ENCODE measurements at regions of chr3 and their contacts with region 1.

Region 1: DNA sequence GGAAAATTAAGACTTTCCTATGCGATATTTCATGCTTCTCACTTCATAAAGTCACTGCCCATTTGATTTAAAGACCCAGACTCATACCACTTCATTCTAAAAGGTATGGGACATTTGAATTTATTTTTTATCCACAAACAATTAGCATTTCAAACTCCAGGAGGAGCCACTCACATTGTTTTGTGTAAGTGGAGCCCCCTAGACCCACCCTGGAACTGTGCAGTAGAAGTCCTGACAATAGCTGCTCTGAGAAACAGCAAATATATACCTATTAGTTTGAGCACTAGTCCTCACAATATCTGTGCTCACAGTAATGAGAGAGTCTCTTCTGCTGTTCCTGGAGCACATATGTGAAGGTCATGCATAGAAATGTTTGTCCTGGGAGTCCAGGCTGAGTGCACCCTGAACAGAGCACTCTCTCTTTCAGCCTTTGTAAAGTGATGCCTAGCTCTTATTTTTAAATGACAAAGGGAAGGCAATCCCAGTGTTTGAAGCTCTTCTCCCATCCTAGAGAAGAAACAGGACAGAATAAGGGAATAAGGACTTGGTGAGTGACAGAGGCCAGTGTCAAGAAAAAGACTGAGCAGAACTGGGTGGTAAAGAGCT is 127.5 kb upstream of the STRIT1 start:
- DNase-seq: no peak
- ATAC-seq: peak; percentile 52; the same call in 1 of the 2 replicates
- H3K4me3 ChIP-seq: no peak overlapping the region
- H3K27ac ChIP-seq: no peak overlapping the region
- H3K4me1 ChIP-seq: peaks cover 0 to 10% of the 10 kb centered on the region in 2 experiments; a peak in 1 of 4 replicates
- H3K27me3 ChIP-seq: no peaks in the 10 kb centered on the region
- CTCF ChIP-seq: peak; percentile 24 to 47 (median 34); a peak in 4 of 6 replicates
- POLR2A ChIP-seq: no peak
- RAD21 ChIP-seq: peak; percentile 32; the same call in 1 of the 2 replicates

Region 2: DNA sequence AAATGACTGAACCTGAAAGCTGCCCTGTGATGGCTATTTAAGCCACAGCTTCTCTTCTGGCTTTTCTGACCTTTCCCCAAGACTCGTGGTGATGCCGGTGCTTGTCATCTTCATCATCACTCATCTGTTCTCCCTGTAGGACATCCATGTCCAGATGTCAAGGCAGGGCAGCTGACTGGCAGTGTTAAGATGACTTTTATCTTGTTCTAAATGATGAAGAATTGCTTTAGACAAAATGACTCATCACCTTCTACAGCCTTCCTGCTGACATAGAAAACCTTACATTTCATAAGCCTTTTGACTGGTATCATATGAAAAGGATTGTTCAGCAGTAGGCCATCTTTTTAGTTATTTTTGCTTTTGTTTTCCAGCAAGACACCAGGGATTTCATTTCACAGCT is 924.0 kb before region 1 on chr3:
- CTCF ChIA-PET with region 1: no interaction called
- POLR2A ChIA-PET with region 1: no interaction called
- RAD21 ChIA-PET with region 1: no interaction called
- intact Hi-C with region 1: loop called (anchors 5 kb)
- DNase-seq: no peak
- ATAC-seq: no peak
- H3K4me3 ChIP-seq: no peak overlapping the region
- H3K27ac ChIP-seq: no peak overlapping the region
- H3K4me1 ChIP-seq: no peaks in the 10 kb centered on the region
- H3K27me3 ChIP-seq: no peaks in the 10 kb centered on the region
- CTCF ChIP-seq: no peak
- POLR2A ChIP-seq: no peak
- RAD21 ChIP-seq: no peak

Region 3: DNA sequence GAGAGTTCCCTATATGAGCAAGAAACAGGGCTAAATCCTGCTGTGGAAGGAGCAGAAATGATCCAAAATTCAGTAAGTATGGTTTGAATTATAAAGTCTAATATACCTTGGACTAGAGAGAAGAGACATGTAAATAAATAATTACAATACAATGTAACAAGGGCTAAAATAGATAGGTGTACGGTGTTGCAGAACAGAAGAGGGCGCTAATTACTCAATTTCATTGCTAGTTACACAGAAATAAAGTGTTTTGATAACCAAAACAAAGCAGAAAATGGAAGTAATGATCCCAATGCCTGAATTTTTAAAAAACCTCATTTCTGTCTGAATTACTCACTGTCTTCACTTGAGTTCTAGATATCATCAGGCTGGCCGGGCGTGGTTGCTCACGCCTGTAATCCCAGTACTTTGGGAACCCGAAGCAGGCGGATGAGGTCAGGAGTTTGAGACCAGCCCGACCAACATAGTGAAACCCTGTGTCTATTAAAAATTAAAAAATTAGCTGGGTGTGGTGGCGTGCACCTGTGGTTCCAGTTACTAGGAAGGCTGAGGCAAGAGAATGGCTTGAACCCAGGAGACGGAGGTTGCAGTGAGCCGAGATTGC is 332.2 kb after region 1 on chr3:
- CTCF ChIA-PET with region 1: no interaction called
- POLR2A ChIA-PET with region 1: no interaction called
- RAD21 ChIA-PET with region 1: no interaction called
- intact Hi-C with region 1: no loop called
- DNase-seq: no peak
- ATAC-seq: peak; percentile 81
- H3K4me3 ChIP-seq: no peak overlapping the region
- H3K27ac ChIP-seq: no peak overlapping the region
- H3K4me1 ChIP-seq: peaks cover 0 to 8% of the 10 kb centered on the region in 2 experiments; a peak in 3 of 4 replicates
- H3K27me3 ChIP-seq: no peaks in the 10 kb centered on the region
- CTCF ChIP-seq: peak; percentile 47 to 74 (median 74); a peak in 5 of 6 replicates
- POLR2A ChIP-seq: no peak
- RAD21 ChIP-seq: peak; percentile 79